Gastrocnemius medialis (tissue), 4 donors: ENCODE measurements at regions of chr18 and their contacts with region 1.

Region 1: GRCh38 chr18:58064406-58064998 is 20.5 kb downstream of the NEDD4L start:
- DNase-seq: no peak
- ATAC-seq: no peak
- H3K4me3 ChIP-seq: no peak overlapping the region
- H3K27ac ChIP-seq: no peak overlapping the region
- H3K4me1 ChIP-seq: no peaks in the 10 kb centered on the region
- H3K27me3 ChIP-seq: no peaks in the 10 kb centered on the region
- CTCF ChIP-seq: no peak
- POLR2A ChIP-seq: no peak

Region 2: GRCh38 chr18:57705826-57706554 is 358.5 kb before region 1 on chr18:
- in situ Hi-C with region 1: no loop called
- intact Hi-C with region 1: no loop called
- DNase-seq: no peak
- ATAC-seq: no peak
- H3K4me3 ChIP-seq: no peak overlapping the region
- H3K27ac ChIP-seq: no peak overlapping the region
- H3K4me1 ChIP-seq: no peaks in the 10 kb centered on the region
- H3K27me3 ChIP-seq: no peaks in the 10 kb centered on the region
- CTCF ChIP-seq: no peak
- POLR2A ChIP-seq: no peak

Region 3: DNA sequence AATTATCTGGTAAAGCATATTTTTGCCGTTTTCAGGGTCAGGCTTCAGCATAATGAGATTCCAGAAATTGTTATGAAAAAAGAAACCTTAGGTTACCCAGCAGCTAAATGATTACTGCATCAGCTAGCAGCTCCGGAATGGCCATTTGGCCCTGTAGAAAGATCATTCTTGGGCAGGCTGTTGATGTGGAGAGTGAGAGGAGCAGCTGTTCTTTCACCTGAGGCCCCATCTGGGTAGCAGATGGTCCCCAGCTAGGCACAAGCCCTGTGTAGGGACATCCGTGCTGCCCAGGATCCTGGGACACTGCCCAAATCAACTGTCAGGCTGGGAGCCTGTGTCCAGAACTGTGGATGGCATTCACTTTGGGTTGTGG is 41.4 kb after region 1 on chr18:
- in situ Hi-C with region 1: loop called in 1 of 4 experiments (anchors 5 kb)
- intact Hi-C with region 1: no loop called
- DNase-seq: no peak
- ATAC-seq: no peak
- H3K4me3 ChIP-seq: no peak overlapping the region
- H3K27ac ChIP-seq: no peak overlapping the region
- H3K4me1 ChIP-seq: no peaks in the 10 kb centered on the region
- H3K27me3 ChIP-seq: no peaks in the 10 kb centered on the region
- CTCF ChIP-seq: no peak
- POLR2A ChIP-seq: no peak